Activated T-helper 2 cell treated with anti-CD3 and anti-CD28 coated beads, Interferon-gamma antibody, Interleukin-2, Interleukin-4, amounts not matched to agents 10 μg/mL and 5 μg/mL and 100 μg/mL, durations not matched to agents 14 hours and 24 hours and 36 hours (primary cell): ENCODE measurements at regions of chr19 and their contacts with region 1.

Region 1: GRCh38 chr19:12945479-12946091 is at the start of gene RAD23A:
- DNase-seq: peak; percentile 97
- H3K4me3 Mint-ChIP-seq: peak within 1 kb of the TSS; percentile 88
- H3K27ac Mint-ChIP-seq: peak within 1 kb of the TSS; percentile 95
- H3K4me1 Mint-ChIP-seq: peaks cover 36% of the 10 kb centered on the region
- H3K27me3 Mint-ChIP-seq: no peaks in the 10 kb centered on the region
- total RNA-seq, gene RAD23A: 189 and 196 TPM in 2 replicates

Region 2: DNA sequence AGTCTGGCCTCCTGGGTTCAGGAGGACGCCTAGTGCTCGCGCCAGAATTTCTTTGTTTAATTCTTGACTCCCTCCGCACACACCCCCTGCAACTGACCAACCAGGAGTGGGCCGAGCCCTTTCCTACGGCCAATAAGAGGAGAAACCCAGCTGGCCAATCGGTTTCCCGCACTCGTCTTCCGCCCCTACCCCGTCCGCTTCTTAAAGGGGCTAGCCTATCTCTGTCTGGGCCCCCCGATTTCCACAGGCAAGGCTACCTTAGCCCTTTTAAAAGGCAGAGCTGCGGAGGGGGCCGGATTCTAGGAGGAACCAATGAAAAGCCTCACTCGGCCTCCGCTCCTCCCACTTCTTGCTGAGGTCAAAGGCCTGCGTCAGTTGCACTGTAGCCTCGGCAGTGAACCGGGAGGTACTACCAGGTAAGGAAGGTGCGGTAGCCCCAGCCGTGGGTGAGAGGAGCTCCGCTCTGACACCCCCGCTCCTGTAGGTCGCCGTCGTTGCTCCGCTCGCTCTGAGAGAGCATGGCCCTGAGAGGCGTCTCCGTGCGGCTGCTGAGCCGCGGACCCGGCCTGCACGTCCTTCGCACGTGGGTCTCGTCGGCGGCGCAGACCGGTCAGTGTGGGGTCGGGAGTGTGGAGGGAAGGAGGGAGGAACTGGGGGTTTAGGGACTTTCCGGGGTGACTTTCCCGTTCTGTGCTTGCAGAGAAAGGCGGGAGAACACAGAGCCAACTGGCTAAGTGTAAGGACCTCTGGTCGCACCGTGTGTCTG is 54.6 kb before region 1 on chr19 and contains the start of gene GCDH:
- intact Hi-C with region 1: no loop called
- DNase-seq: peak; percentile 96
- H3K4me3 Mint-ChIP-seq: peak within 1 kb of the TSS; percentile 95
- H3K27ac Mint-ChIP-seq: peak within 1 kb of the TSS; percentile 81
- H3K4me1 Mint-ChIP-seq: peaks cover 9% of the 10 kb centered on the region
- H3K27me3 Mint-ChIP-seq: no peaks in the 10 kb centered on the region
- total RNA-seq, gene GCDH: 51.6 and 53.2 TPM in 2 replicates

Region 3: DNA sequence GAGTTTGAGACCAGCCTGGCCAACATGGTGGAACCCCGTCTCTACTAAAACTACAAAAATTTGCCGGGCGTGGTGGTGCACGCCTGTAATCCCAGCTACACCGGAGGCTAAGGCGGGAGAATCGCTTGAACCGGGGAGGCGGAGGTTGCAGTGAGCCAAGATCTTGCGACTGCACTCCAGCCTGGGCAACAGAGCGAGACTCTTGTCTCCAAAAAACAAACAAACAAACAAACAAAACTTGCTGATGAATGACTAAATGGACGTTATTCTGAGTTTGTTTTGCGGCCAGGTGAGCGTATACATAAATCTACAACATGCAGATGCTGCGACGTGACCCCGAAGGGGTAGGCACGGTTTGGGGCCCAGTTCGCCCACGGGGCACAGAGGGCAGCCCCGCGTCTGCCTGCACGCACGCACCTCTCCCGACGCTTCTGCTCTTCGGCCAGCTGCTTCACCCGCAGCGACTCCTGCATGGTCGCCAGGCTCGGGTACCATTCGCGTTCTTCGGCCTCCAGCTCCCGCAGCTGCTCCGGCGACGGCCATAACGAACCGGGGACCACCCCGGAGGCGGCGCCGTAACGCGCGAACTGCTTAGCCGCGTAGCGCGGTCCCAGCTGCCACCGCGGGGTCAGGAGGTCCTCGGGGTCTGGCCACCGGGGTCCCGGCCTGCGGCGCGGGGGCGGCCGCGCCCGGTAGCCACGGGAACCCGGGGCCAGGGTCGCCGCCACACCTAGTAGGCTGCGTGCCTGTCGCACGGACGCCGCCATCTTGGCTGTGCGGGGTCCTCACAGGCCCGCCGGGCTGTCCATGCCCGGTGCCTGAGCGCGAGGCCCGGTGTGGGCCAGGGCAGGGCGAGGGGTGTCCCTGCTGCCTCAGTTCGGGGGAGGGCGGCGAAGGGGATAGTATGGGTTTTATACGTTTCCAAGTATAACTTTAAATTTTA is 11.1 kb after region 1 on chr19 and contains the start of gene GADD45GIP1:
- intact Hi-C with region 1: loop called (anchors 1 kb)
- DNase-seq: peak; percentile 79
- H3K4me3 Mint-ChIP-seq: peak within 1 kb of the TSS; percentile 93
- H3K27ac Mint-ChIP-seq: peak within 1 kb of the TSS; percentile 96
- H3K4me1 Mint-ChIP-seq: peaks cover 22% of the 10 kb centered on the region
- H3K27me3 Mint-ChIP-seq: peaks cover 2% of the 10 kb centered on the region
- total RNA-seq, gene GADD45GIP1: 29.2 and 32.6 TPM in 2 replicates